ENCODE measurements at regions of chr12 and their contacts with region 1.

Region 1: GRCh38 chr12:26853303-26854030 is 20.5 kb upstream of the ITPR2 start:
- DNase-seq: no peak
- H3K4me3 ChIP-seq: no peak overlapping the region
- H3K27ac ChIP-seq: no peak overlapping the region
- H3K4me1 ChIP-seq: no peaks in the 10 kb centered on the region
- H3K27me3 ChIP-seq: no peaks in the 10 kb centered on the region
- CTCF ChIP-seq: peak; percentile 75 to 93 (median 87)
- POLR2A ChIP-seq: no peak

Region 2: DNA sequence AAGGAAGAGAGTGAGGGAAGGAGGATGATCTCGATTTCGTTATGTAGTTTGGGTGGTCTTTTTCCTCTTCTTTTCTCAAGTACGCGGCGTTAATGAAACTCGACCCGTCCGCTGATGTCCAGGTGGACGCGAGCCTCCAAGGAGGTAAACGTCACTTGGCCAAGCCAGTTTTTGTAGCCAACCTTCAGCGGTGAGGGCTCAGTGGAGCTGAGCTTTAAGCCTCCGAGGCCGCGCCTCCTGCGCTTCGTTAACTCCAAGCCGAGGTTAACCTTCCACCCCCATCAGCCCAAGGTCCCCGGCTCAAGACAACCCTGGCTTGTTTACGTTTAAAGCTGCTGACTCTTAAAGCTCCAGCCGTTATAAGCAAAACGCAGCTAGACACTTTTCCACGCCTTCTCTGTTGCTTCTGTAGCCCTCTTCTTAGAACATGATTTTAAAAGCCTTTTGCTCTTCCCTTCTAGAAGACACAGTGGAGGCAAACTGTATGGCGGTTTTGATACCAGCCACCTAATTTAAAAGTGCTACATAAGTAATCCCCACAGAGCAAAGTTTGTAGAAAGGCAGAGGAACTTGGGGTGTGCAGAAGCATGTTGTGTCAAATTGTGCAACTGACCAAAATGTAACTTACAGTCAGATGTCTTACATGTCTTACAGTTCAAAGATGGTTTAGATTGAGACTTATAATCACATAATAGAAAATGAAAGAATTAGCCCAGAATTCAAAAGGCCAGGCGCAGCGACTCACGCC is 19.6 kb before region 1 on chr12:
- intact Hi-C with region 1: loop called (anchors 2 kb)
- DNase-seq: no peak
- H3K4me3 ChIP-seq: peak overlapping the region; percentile 71 to 85
- H3K27ac ChIP-seq: peak overlapping the region; percentile 91
- H3K4me1 ChIP-seq: peaks cover 25% of the 10 kb centered on the region
- H3K27me3 ChIP-seq: no peaks in the 10 kb centered on the region
- CTCF ChIP-seq: no peak
- POLR2A ChIP-seq: no peak

Region 3: GRCh38 chr12:26884765-26885576 is 31.5 kb after region 1 on chr12:
- intact Hi-C with region 1: no loop called
- DNase-seq: no peak
- H3K4me3 ChIP-seq: no peak overlapping the region
- H3K27ac ChIP-seq: no peak overlapping the region
- H3K4me1 ChIP-seq: peaks cover 9% of the 10 kb centered on the region
- H3K27me3 ChIP-seq: no peaks in the 10 kb centered on the region
- CTCF ChIP-seq: peak; percentile 86 to 90 (median 89)
- POLR2A ChIP-seq: no peak

Measured in vagina (tissue), 2 donors.